Prostate gland (tissue), 2 donors: ENCODE measurements at regions of chr2 and their contacts with region 1.

Region 1: DNA sequence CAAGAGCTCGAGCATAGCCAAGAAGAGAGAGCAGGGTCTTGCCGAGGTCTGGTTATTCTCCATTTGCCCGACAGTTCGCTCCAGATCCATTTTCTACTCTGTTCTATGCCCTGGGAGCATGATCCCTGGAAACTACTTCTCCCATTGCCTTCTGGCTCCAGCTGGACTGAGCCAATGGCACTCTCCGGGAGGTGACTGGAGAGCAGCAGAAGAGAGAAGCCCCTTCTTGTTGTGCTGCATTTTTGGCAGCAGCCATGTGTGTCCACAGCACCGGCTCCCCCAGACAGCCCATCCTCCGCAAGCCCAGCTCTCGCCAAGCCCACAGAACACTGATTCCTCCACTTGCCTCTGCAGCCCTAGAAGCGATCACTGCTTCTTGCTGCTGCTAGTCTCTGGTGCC is 345.5 kb downstream of the TNS1 start:
- DNase-seq: no peak
- H3K4me3 ChIP-seq: no peak overlapping the region
- H3K27ac ChIP-seq: peak overlapping the region; percentile 57 to 65
- H3K4me1 ChIP-seq: no peaks in the 10 kb centered on the region
- H3K27me3 ChIP-seq: no peaks in the 10 kb centered on the region
- CTCF ChIP-seq: no peak
- POLR2A ChIP-seq: no peak

Region 2: DNA sequence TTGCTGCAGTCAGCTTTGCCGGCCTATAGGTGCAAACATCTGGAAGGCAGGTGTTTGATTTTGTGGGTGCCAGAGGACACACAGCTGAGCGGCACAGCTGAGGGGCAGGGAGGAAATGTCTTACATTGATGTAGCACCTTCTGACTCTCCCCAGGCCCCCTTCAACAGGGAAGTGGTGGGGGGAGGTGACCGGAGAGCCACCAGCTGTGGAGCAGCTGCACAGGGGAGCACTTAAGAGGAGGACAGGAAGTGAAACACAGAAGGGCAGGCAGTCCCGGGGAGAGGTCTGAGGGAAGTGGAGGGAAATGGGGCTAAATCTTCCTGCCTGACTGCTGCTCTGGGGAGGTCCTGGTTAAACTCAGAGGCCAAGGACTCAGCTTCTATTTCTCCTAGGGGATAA is 63.5 kb before region 1 on chr2:
- intact Hi-C with region 1: no loop called
- DNase-seq: no peak
- H3K4me3 ChIP-seq: no peak overlapping the region
- H3K27ac ChIP-seq: no peak overlapping the region
- H3K4me1 ChIP-seq: no peaks in the 10 kb centered on the region
- H3K27me3 ChIP-seq: no peaks in the 10 kb centered on the region
- CTCF ChIP-seq: no peak
- POLR2A ChIP-seq: no peak

Region 3: DNA sequence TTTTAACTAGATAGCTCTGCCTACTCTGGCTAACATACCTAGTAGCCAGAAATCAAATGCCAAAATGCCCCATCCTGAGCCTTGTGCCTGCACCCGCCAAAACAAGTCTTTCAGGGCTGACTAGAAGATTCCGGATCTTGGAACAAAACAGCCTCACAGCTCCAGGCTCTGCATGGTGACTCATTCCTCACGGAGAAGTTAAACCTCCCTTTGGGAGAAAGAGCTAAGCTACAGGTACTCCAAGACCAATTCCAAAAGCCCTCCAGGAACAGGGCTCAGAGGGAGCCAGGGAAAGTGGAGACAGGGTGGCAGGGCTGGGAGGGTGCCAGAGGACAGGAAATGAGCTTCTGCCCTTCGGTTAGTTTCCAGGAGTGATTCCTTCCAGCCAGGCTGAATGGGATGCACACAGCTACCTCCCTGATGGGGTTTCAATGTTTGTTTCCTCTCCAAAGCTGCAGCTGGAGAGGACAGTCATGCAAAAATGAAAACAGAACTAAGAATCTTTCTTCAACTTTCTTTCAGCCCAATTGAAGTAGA is 49.9 kb after region 1 on chr2:
- intact Hi-C with region 1: loop called (anchors 5 kb)
- DNase-seq: peak; percentile 60
- H3K4me3 ChIP-seq: no peak overlapping the region
- H3K27ac ChIP-seq: peak overlapping the region; percentile 62 to 63
- H3K4me1 ChIP-seq: peaks cover 4% of the 10 kb centered on the region
- H3K27me3 ChIP-seq: no peaks in the 10 kb centered on the region
- CTCF ChIP-seq: no peak
- POLR2A ChIP-seq: no peak